Psoas muscle (tissue), 8 donors: ENCODE measurements at regions of chr6 and their contacts with region 1.

Region 1: DNA sequence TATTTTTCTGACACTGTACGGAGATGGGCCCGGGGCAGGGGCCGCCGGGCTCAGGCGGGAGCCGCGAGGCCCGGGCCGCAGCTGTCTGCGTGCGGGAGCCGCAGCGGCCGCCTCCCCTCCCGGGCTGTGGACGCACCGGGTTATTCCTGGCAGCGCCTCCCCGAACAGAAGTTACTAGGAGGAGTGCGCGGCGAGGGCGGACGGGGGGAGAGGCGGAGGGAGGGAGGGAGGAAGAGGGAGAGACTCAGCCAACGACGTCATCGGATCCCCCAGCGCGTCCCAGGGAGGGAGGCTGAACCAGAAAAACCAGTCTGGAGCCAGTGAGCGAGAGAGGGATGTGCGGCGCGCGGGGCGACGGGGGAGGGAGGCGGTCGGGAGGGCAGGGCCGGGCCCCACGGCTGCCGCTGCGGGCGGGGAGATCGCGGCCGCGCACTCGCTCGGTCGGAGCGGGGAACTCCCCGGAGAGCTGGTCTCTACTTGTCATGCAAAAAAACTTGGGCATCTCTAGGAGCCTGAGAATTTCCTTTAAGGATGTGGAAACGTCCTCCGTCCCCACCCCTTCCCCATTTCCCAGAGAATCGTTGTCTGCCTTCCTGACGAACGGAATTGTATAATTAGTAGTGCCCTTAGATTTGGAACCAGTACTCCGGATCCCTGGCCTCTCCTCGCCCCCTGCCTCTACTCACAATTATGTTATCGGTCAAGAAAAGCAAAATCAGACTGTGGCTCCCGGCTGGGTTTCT is 1.4 kb upstream of the HIVEP2 start:
- DNase-seq: peak; percentile 97 to 99
- ATAC-seq: peak; percentile 78 to 86 (median 82)
- H3K4me3 ChIP-seq: peak overlapping the region; percentile 94
- H3K27ac ChIP-seq: peak overlapping the region; percentile 99
- H3K4me1 ChIP-seq: peaks cover 26% of the 10 kb centered on the region
- H3K27me3 ChIP-seq: no peaks in the 10 kb centered on the region
- CTCF ChIP-seq: no peak

Region 2: GRCh38 chr6:142702501-142703460 is 243.6 kb before region 1 on chr6:
- intact Hi-C with region 1: loop called in 1 of 2 experiments (anchors 5 kb)
- DNase-seq: peak; percentile 29 to 57
- ATAC-seq: peak in 1 of 4 donors; percentile 40
- H3K4me3 ChIP-seq: no peak overlapping the region
- H3K27ac ChIP-seq: peak overlapping the region; percentile 17
- H3K4me1 ChIP-seq: no peaks in the 10 kb centered on the region
- H3K27me3 ChIP-seq: no peaks in the 10 kb centered on the region
- CTCF ChIP-seq: no peak

Region 3: DNA sequence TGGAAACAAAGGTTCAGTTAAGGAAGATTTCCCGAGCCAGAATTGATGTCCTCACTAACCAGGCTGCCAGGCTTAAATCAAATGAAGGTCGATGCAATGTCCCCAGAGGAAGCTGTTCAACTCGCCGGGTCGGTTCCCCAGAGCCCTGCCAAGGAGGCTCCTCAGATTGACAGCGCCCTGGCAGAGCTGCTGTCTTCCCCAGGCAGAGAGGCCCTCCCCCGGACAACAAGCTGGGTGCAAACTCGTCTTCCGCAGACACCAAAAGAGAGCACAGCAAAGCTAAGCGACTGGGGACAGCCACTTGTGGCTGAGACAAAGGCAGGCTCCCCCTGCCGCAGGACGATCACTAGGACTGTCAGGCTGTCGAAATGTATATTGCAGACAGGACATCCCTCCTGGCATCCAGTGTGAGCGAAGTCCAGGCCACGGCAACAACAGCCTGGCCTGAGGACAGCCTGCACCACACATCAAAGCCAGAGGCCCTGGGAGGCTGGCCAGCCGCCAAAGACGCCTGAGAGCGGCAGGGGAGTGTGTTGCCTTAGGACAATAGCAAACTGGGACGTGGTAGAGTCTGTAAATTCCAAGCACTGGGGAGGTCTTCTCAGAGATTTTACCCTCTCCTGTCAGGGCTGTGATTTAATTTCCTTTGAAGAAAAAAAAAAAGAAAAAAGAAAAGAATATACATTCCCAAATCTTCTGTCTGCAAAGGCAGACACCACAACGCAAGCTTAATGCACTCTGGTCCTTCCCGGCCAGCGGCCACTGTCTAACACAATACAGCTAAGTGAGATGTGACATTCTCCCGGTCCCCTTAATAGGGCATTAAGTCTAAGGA is 100.5 kb before region 1 on chr6:
- intact Hi-C with region 1: loop called (anchors 2 to 5 kb)
- DNase-seq: peak; percentile 88 to 94
- ATAC-seq: peak; percentile 81 to 86 (median 84)
- H3K4me3 ChIP-seq: peak overlapping the region; percentile 59
- H3K27ac ChIP-seq: peak overlapping the region; percentile 89
- H3K4me1 ChIP-seq: peaks cover 83% of the 10 kb centered on the region
- H3K27me3 ChIP-seq: no peaks in the 10 kb centered on the region
- CTCF ChIP-seq: no peak

Region 4: GRCh38 chr6:142885182-142885867 is 61.0 kb before region 1 on chr6:
- intact Hi-C with region 1: loop called (anchors 2 to 5 kb)
- DNase-seq: no peak
- ATAC-seq: peak; percentile 92 to 95 (median 94)
- H3K4me3 ChIP-seq: peak overlapping the region; percentile 59
- H3K27ac ChIP-seq: peak overlapping the region; percentile 84
- H3K4me1 ChIP-seq: peaks cover 68% of the 10 kb centered on the region
- H3K27me3 ChIP-seq: no peaks in the 10 kb centered on the region
- CTCF ChIP-seq: no peak

Region 5: GRCh38 chr6:142906945-142907470 is 39.3 kb before region 1 on chr6:
- intact Hi-C with region 1: loop called in 1 of 2 experiments (anchors 1 kb)
- DNase-seq: no peak
- ATAC-seq: peak; percentile 69 to 81 (median 71)
- H3K4me3 ChIP-seq: peak overlapping the region; percentile 44
- H3K27ac ChIP-seq: peak overlapping the region; percentile 85
- H3K4me1 ChIP-seq: peaks cover 59% of the 10 kb centered on the region
- H3K27me3 ChIP-seq: no peaks in the 10 kb centered on the region
- CTCF ChIP-seq: no peak

Region 6: DNA sequence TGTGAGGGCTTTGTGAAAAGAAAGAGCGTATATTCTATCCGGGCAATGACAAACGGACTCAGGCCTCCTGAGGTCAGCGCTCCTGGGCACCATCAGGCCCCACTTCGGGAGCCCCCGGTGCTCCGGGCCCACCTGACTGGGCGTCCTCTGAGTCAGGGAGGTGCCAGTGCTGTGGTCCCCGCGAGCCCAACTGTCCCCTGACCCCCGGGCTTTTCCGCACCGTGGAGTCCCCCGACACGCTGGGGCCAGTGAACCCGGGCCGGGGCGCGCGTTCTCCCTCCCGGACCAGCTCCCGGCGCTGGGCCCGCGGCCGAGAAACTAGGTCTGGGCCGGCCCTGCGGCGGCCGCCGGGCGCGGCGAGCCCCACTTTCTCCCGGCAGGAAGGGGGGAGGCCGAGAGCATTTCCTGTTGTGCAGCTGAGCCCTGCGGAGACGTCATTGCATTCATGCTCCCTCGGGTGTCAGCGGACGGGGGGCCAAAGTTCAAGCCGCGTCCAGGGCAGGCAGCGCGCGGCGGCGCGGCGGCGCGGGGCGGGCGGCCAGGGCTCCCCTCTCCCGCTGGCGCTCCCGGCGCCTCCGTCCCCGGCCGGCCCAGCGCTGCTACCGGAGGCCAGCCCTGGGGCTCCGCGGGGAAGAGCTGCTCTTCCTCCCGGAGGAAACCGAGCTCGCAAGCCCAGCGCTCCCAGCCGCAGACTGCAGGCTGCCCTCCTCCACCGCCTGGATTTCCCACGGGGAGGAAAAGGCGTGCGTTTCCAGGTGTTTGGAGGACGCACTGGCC is 19.7 kb before region 1 on chr6:
- intact Hi-C with region 1: loop called (anchors 1 to 2 kb)
- DNase-seq: peak; percentile 87 to 93
- ATAC-seq: peak; percentile 86 to 92 (median 87)
- H3K4me3 ChIP-seq: peak overlapping the region; percentile 76
- H3K27ac ChIP-seq: peak overlapping the region; percentile 93
- H3K4me1 ChIP-seq: peaks cover 52% of the 10 kb centered on the region
- H3K27me3 ChIP-seq: no peaks in the 10 kb centered on the region
- CTCF ChIP-seq: no peak

Region 7: DNA sequence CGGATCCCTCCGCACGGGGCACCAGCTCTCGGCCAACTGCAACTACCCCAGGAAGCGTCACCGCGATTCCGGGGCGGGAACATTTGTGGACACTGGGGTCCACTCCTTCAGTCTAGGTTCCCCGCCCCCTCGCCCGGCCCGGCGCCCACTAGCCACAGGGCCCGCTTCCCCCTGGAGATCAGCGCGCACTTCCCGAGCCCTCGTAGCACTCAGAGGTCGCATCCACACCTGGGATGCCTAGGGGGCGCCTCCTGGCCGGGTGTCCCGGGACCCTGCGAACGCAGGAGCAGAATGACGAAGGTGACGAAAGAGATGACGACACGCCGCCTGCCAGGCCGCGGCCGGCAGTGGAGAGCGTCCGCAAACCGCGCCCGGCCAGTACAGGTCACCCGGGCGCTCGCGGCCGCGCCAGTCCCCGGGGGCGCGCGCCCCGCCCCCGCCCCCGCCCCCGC is 114.0 kb after region 1 on chr6:
- intact Hi-C with region 1: loop called (anchors 2 to 5 kb)
- DNase-seq: peak; percentile 88 to 90
- ATAC-seq: peak; percentile 74 to 84 (median 81)
- H3K4me3 ChIP-seq: peak overlapping the region; percentile 70
- H3K27ac ChIP-seq: peak overlapping the region; percentile 94
- H3K4me1 ChIP-seq: peaks cover 36% of the 10 kb centered on the region
- H3K27me3 ChIP-seq: no peaks in the 10 kb centered on the region
- CTCF ChIP-seq: no peak

Region 8: DNA sequence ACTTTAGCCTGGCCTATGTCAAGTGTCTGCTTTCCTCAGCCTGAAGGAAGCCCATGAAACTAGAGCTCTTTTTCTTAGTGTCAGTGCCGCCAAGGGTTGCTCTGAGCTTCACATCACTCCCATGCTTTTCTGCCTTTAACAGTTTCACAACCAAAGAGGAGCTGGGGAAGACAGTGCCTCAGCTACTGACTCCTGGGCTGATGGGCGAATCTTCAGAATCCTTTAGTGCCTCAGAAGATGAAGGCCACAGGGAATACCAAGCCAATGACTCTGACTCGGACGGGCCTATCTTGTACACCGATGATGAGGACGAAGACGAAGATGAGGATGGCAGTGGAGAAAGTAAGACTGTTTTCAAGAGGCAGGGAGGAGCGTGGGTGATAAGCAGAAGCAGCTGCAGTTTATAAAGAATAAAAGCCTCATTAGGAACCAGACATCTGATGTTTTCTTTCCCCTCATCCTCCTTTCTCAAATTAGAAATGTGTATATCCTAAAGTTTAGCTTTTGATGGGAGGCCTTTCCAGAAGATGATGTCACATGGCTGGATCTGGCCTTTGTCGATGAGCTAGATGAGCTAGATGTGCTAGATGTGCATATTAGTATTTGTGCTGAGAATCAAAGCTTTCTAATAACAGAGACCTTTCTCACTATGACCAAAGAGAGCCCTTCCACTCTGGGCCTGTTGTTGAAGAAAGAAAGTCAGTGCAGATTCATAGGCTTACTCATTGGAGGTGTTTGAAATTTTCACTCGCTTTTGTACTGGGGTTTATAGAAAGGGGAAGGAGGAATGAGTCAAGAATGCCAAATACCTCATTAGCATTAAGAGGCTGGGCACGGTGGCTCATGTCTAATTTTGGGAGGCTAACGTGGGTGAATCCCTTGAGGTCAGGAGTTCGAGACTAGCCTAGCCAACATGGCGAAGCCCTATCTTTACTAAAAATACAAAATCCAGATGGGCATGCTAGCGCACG is 826.0 kb after region 1 on chr6:
- intact Hi-C with region 1: no loop called
- DNase-seq: no peak
- ATAC-seq: no peak
- H3K4me3 ChIP-seq: no peak overlapping the region
- H3K27ac ChIP-seq: no peak overlapping the region
- H3K4me1 ChIP-seq: peaks cover 16% of the 10 kb centered on the region
- H3K27me3 ChIP-seq: no peaks in the 10 kb centered on the region
- CTCF ChIP-seq: no peak